HepG2 (cell line): ENCODE measurements at regions of chr3 and their contacts with region 1.

Region 1: GRCh38 chr3:161220850-161221753 is at the start of gene NMD3:
- DNase-seq: peak; percentile 87
- ATAC-seq: peak; percentile 96
- H3K4me3 ChIP-seq: peak within 1 kb of the TSS; percentile 84 to 99 (median 92)
- H3K27ac ChIP-seq: peak within 1 kb of the TSS; percentile 90
- H3K4me1 ChIP-seq: peaks cover 42% of the 10 kb centered on the region
- H3K27me3 ChIP-seq: no peaks in the 10 kb centered on the region; a peak in 2 of 5 replicates
- CTCF ChIP-seq: no peak
- EP300 ChIP-seq: 0 out of 4 replicates have a peak, but pooled peaks of 1 of the 2 experiments have one; percentile 0
- POLR2A ChIP-seq: peak; percentile 79 to 88
- RAD21 ChIP-seq: 0 out of 2 replicates have a peak, but pooled peaks have one; percentile 19
- total RNA-seq, gene NMD3: 55.2 and 95.4 TPM in 2 replicates

Region 2: DNA sequence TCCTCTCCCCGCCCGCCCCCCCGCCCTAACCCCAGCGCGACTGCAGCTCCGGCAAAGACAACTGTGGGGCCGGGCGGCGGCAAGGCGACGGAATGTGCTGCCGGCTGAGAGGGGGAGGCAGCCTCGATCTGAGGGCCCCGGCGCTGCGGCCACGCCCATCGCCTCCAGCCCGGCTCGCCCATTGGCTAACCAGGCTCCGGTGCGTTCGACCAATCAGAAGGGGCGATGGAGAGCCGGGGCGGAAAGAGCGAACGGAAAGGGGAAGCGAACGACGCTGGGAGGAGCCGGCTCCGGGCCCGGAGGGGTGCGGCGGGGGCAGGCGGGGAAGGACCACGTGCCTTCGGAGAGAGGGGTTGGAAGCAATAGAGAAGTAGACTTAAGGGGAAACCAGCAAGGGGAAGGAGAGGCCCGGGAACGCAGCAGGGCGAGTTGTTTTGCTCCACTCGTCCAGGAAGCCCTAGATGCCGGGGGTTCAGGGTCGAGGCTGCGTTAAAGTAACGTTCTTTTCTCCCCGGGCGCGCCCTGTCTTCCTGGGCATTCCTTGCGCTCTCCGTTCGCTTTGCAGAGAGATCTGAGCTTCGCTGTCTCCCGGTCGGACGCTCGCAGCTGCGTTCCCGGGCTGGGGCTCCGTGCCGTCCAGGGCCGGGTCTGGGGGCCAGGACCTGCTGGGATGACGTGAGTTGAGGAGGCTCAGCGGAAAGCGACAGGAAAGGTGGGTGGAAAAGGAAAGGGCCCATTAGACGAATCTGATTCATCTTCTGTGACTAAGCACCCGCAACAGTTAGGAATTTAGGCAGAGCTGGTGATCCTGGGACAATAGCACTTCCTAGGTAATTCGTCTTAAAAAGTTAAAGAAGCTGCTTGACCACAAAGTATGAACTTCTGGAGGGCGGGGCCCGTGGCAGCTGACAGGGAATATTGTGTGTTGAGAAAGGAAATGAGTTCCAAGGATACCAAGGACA is 655.4 kb before region 1 on chr3 and contains the start of gene KPNA4:
- CTCF ChIA-PET with region 1: no interaction called
- POLR2A ChIA-PET with region 1: no interaction called
- in situ Hi-C with region 1: no loop called
- intact Hi-C with region 1: loop called (anchors 10 kb)
- DNase-seq: peak; percentile 92
- ATAC-seq: peak; percentile 95
- H3K4me3 ChIP-seq: peak within 1 kb of the TSS; percentile 86 to 95 (median 86)
- H3K27ac ChIP-seq: peak within 1 kb of the TSS; percentile 92
- H3K4me1 ChIP-seq: peaks cover 41% of the 10 kb centered on the region
- H3K27me3 ChIP-seq: no peaks in the 10 kb centered on the region; a peak in 1 of 5 replicates
- CTCF ChIP-seq: no peak
- EP300 ChIP-seq: no peak
- POLR2A ChIP-seq: peak; percentile 78 to 84
- RAD21 ChIP-seq: no peak
- total RNA-seq, gene KPNA4: 27.9 and 32.6 TPM in 2 replicates

Region 3: GRCh38 chr3:160754855-160755747 is 466.0 kb before region 1 on chr3:
- CTCF ChIA-PET with region 1: no interaction called
- POLR2A ChIA-PET with region 1: no interaction called
- in situ Hi-C with region 1: loop called (anchors 10 kb)
- intact Hi-C with region 1: no loop called
- DNase-seq: peak; percentile 58
- ATAC-seq: peak; percentile 93
- H3K4me3 ChIP-seq: peak overlapping the region; percentile 40 to 77 (median 58)
- H3K27ac ChIP-seq: peak overlapping the region; percentile 11
- H3K4me1 ChIP-seq: peaks cover 30% of the 10 kb centered on the region
- H3K27me3 ChIP-seq: peaks cover 0 to 35% of the 10 kb centered on the region in 2 experiments
- CTCF ChIP-seq: no peak
- EP300 ChIP-seq: no peak
- POLR2A ChIP-seq: peak; percentile 48 to 59; a peak in 3 of 4 replicates
- RAD21 ChIP-seq: no peak

Region 4: GRCh38 chr3:161263057-161263456 is 42.0 kb after region 1 on chr3:
- CTCF ChIA-PET with region 1: no interaction called
- POLR2A ChIA-PET with region 1: interaction called, 6 read pairs
- in situ Hi-C with region 1: no loop called
- intact Hi-C with region 1: loop called (anchors 5 kb)
- DNase-seq: no peak
- ATAC-seq: no peak
- H3K4me3 ChIP-seq: no peak overlapping the region
- H3K27ac ChIP-seq: no peak overlapping the region
- H3K4me1 ChIP-seq: peaks cover 23% of the 10 kb centered on the region
- H3K27me3 ChIP-seq: no peaks in the 10 kb centered on the region
- CTCF ChIP-seq: no peak
- EP300 ChIP-seq: no peak
- POLR2A ChIP-seq: no peak
- RAD21 ChIP-seq: no peak

Region 5: DNA sequence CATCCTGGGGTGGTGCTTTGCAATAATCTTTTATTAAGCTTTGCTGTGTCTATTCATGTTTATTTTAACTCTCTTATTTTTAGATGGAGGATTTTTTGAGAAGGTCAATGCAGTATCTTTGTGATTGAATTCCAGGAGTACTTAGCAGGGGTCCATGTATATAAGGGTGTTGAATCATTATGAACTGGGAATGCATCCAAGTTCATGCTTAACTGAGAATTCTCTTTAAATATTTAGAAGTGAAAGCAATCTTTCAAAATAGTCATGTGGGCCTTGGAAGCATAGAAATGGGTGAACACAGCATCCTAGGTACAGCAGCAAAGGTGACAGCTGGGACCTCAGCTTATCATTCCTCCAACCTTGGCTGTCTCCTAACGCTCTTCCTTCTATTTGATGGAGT is 122.9 kb after region 1 on chr3:
- CTCF ChIA-PET with region 1: no interaction called
- POLR2A ChIA-PET with region 1: no interaction called
- in situ Hi-C with region 1: no loop called
- intact Hi-C with region 1: loop called (anchors 5 kb)
- DNase-seq: no peak
- ATAC-seq: no peak
- H3K4me3 ChIP-seq: no peak overlapping the region
- H3K27ac ChIP-seq: peak overlapping the region; percentile 5
- H3K4me1 ChIP-seq: peaks cover 57% of the 10 kb centered on the region
- H3K27me3 ChIP-seq: no peaks in the 10 kb centered on the region
- CTCF ChIP-seq: no peak
- EP300 ChIP-seq: no peak
- POLR2A ChIP-seq: no peak
- RAD21 ChIP-seq: no peak